A549 (cell line): ENCODE measurements at regions of chr4 and their contacts with region 1.

Region 1: DNA sequence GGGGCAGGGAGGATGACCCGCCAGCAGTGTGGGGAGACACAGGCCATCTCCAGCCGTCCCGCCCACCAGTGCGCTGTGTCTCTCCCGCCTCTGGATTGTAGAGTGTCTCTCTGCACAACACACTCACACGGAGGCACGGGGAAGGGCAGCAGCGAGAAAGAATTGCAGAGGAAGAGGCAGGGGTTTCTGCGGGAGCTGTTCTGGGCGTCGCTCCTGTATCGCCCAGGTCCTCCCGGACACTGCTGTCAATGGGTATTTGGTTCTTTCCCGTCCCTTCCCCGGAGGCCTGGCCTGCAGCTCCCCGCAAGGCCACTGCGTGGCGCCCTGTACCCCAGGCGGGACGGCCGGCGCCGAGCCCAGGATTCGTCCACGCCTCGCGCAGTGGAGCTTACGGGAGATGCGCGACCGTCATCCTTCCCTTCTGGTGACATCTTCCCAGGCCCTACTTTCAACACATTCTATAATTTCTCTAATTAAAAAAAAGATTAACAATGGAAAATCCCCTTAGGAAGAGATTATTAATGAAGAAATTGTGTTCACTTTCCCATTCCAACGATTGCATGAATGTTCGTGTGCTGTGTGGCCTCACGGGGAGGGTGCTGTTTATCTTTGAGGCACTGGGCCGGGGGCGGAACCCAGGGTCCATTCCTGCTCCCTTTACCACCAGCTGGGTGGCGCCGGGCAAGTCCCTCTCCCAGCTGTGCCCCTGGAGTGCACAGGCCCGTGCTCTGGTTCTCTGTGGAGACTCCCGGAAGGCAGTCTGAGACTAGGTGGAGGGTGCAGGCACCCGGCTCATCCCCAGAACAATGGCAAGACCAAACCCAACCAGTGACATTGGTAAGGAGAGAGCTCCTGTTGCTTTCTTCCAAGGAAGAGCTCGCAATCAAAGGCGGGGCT is 95.7 kb downstream of the CPZ start:
- DNase-seq: peak; percentile 34 to 48
- ATAC-seq: peak; percentile 68 to 94
- H3K4me3 ChIP-seq: no peak overlapping the region
- H3K27ac ChIP-seq: no peak overlapping the region
- H3K4me1 ChIP-seq: no peaks in the 10 kb centered on the region
- CTCF ChIP-seq: peak; percentile 48
- EP300 ChIP-seq: no peak
- POLR2A ChIP-seq: no peak
- RAD21 ChIP-seq: peak; percentile 40 to 51; a peak in 3 of 5 replicates

Region 2: DNA sequence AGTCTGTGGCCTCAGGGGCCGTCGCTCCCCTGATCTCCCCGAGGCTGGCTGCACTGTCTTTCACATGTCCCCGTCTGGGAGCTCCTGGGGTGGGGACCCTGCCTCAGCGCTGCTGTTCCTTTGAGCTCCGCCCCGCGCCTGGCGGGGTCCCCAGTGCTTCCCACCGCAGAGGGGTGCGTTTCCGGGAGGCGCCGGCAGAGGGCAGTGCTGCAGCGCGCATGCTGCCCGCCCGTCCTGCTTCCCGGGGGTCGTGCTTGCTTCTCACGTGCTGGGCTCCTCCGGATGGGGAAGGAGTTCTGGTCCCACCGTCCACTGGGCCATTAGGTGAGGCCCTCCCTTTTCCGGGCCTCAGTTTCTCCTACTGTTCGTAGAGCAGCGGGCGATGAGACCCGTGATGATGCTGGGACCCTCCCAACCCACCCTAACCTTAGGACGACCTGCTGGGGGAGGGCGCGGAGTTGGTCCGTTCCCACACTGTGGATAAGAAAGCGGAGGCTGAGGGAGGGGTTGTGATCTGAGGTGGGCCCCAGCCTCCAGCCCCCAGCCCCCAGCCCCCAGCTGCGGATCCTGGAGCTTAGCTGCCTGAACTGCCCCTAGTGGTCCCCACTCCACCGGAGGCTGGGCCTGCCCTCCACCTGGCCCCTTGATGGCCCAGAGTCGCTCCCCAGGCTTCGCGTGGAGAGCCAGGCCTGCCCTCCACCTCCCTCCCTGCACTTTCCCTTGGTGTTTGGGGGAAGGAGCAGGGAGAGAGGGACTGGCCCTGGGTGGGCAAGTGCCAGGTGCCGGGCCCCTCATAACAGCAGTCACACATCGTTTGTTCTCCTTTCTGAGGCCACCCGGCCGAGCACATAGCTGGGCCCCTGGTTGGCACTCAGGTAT is 80.4 kb before region 1 on chr4:
- CTCF ChIA-PET with region 1: no interaction called
- POLR2A ChIA-PET with region 1: no interaction called
- DNase-seq: peak in 1 of 2 experiments; percentile 50
- ATAC-seq: peak; percentile 50 to 82; a peak in 3 of 6 replicates
- H3K4me3 ChIP-seq: no peak overlapping the region
- H3K27ac ChIP-seq: no peak overlapping the region
- H3K4me1 ChIP-seq: no peaks in the 10 kb centered on the region
- CTCF ChIP-seq: peak; percentile 66
- EP300 ChIP-seq: no peak
- POLR2A ChIP-seq: no peak
- RAD21 ChIP-seq: peak; percentile 54 to 72

Region 3: GRCh38 chr4:8676676-8677075 is 11.6 kb before region 1 on chr4:
- CTCF ChIA-PET with region 1: interaction called, 10 read pairs
- POLR2A ChIA-PET with region 1: no interaction called
- DNase-seq: no peak
- ATAC-seq: no peak
- H3K4me3 ChIP-seq: no peak overlapping the region
- H3K27ac ChIP-seq: no peak overlapping the region
- H3K4me1 ChIP-seq: no peaks in the 10 kb centered on the region
- CTCF ChIP-seq: no peak
- EP300 ChIP-seq: no peak
- POLR2A ChIP-seq: no peak
- RAD21 ChIP-seq: no peak

Region 4: GRCh38 chr4:8886612-8887406 is 198.5 kb after region 1 on chr4:
- CTCF ChIA-PET with region 1: interaction called, 15 read pairs
- POLR2A ChIA-PET with region 1: no interaction called
- DNase-seq: no peak
- ATAC-seq: no peak
- H3K4me3 ChIP-seq: no peak overlapping the region
- H3K27ac ChIP-seq: no peak overlapping the region
- H3K4me1 ChIP-seq: no peaks in the 10 kb centered on the region
- CTCF ChIP-seq: peak; percentile 18; the same call in 1 of the 3 replicates
- EP300 ChIP-seq: no peak
- POLR2A ChIP-seq: no peak
- RAD21 ChIP-seq: no peak